Colonic mucosa (tissue), 4 donors: ENCODE measurements at regions of chr18 and their contacts with region 1.

Region 1: DNA sequence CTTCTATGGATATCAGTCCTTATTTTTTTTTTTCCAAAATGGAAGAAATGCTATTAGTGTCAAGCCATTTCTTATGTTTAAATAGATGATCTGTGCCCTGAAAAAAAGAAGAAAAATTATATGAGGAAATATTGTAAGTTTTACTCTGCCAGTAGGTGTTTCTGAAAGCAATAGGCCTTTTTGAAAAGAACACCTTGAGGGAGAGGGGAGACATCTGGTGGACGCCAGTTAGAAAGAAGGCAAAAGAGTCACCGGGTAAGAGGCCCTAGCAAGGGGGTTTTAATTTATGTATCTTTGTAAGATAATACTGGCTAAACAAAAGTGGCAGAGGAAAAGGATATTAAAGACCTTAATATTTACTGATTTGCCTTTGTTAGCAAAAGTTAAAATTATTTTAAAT is 56.1 kb downstream of the DYNAP start:
- DNase-seq: peak; percentile 36
- H3K4me3 ChIP-seq: no peak overlapping the region
- H3K27ac ChIP-seq: no peak overlapping the region
- H3K4me1 ChIP-seq: no peaks in the 10 kb centered on the region
- H3K27me3 ChIP-seq: no peaks in the 10 kb centered on the region
- CTCF ChIP-seq: no peak

Region 2: DNA sequence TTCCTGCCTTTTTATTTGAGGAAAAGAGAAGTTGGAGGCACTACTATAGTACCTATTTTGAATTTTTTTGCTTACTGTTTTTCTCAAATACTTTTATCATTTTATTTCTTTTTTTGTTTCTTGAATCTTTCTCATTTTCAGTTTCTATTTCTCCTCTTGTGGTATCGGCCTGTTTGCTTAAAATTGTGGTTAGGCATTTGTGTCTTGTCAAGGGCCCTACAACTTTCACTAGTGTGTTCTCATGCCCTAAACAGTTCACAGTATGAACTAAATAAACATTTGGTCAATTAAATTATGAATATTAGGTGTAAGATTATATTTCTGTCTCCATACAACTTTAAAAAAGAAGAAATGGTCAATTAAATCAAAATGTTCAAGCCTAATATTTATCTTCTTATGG is 1036.2 kb before region 1 on chr18:
- intact Hi-C with region 1: loop called (anchors 10 kb)
- DNase-seq: no peak
- H3K4me3 ChIP-seq: no peak overlapping the region
- H3K27ac ChIP-seq: no peak overlapping the region
- H3K4me1 ChIP-seq: no peaks in the 10 kb centered on the region
- H3K27me3 ChIP-seq: no peaks in the 10 kb centered on the region
- CTCF ChIP-seq: no peak

Region 3: DNA sequence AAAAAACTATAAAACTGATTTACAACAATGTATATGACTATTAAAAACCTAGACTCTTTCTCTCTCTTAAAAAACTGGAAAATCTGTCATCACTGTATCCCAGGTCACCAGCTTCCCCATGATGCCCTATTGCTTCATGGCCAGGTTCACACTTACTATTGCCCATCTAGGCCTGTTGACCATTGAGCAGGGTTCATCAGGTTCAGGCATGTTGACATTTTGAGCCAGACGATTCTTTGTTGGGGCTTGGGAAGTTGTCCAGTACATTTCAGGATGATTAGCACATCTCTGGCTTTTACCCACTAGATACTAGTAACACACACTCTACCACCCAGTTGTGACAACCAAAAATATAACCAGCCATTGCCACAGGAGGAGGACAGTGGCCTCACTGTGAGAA is 154.2 kb after region 1 on chr18:
- intact Hi-C with region 1: no loop called
- DNase-seq: no peak
- H3K4me3 ChIP-seq: no peak overlapping the region
- H3K27ac ChIP-seq: no peak overlapping the region
- H3K4me1 ChIP-seq: no peaks in the 10 kb centered on the region
- H3K27me3 ChIP-seq: no peaks in the 10 kb centered on the region
- CTCF ChIP-seq: no peak

Region 4: DNA sequence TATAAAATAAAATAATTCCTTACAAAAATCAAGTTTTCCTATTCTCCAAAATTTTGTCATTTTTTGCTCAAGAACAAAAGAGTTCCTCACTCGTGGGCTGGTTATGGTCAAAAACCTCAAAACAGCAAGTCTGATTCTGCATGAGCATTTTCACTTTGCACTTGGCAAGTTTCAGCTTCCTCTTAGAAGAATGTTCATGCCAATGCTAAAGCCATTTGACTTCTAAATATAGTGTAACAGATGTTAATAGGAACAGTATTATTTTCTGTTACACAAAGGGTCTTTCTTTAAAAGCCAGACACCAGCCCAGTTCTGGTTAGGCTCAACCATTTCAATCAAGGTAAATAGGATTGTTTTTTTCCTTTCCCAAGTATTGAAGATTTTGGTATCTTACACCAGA is 573.3 kb after region 1 on chr18:
- intact Hi-C with region 1: no loop called
- DNase-seq: no peak
- H3K4me3 ChIP-seq: no peak overlapping the region
- H3K27ac ChIP-seq: no peak overlapping the region
- H3K4me1 ChIP-seq: no peaks in the 10 kb centered on the region
- H3K27me3 ChIP-seq: no peaks in the 10 kb centered on the region
- CTCF ChIP-seq: no peak